ENCODE measurements at regions of chr3 and their contacts with region 1.

Region 1: DNA sequence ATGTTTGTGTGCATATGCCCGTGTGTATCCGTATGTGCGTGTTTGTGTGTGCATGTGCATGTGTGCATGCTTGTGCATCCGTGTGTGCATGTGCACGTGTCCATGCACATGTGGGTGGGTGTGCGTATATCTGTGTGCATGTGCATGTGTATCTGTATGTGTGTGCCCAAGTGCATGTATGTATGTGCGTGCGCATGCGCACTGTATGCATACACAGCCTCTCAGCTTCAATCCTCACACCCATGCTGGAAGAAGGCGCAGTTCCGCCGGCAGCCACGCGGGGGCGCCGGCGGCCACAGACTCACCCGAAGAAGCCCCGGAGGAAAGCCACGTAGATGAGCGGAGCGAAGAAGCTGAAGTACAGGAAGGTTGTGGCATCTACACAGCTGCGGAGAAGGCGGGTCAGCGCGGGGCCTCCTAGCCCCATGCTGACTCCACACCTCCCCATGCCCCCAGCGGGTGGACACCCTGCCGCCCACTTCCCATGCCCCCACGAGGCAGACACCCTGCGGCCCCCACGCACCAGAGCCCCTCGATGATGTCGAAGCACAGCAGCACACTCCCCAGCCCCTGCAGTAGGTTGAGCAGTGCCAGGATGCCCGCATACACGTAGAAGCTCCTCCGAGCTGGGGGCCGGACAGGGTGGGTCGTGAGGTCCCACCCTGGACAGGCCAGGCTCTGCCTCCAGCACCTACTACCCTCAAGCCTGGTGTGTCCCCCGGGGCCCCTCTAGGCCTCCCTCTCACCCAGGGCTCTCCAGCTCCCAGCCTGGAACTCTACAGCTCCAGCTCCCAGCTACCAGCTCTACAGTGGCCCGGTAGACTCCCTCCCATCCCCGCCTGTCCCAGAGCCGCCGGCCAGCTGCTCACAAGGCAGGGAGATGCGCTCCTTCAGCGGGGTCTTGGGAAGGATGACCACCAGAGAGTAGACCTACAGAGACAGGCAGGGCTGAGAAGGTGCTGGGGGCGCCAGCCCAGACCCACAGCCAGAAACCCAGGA is 15.4 kb downstream of the TPRA1 start:
- DNase-seq: peak; percentile 79 to 81
- ATAC-seq: peak; percentile 72 to 94 (median 86)
- H3K4me3 ChIP-seq: peak overlapping the region in 1 of 10 donors; percentile 22
- H3K27ac ChIP-seq: peak overlapping the region in 1 of 10 donors; percentile 30
- H3K4me1 ChIP-seq: peaks cover 2 to 16% (median 9%) of the 10 kb centered on the region in 9 donors
- H3K27me3 ChIP-seq: no peaks in the 10 kb centered on the region
- CTCF ChIP-seq: peak; percentile 94 to 99 (median 98)

Region 2: GRCh38 chr3:127366383-127366782 is 208.8 kb before region 1 on chr3:
- intact Hi-C with region 1: no loop called
- DNase-seq: no peak
- ATAC-seq: no peak
- H3K4me3 ChIP-seq: no peak overlapping the region
- H3K27ac ChIP-seq: no peak overlapping the region
- H3K4me1 ChIP-seq: no peaks in the 10 kb centered on the region
- H3K27me3 ChIP-seq: peaks cover 0 to 82% (median 50%) of the 10 kb centered on the region in 7 donors
- CTCF ChIP-seq: no peak

Region 3: DNA sequence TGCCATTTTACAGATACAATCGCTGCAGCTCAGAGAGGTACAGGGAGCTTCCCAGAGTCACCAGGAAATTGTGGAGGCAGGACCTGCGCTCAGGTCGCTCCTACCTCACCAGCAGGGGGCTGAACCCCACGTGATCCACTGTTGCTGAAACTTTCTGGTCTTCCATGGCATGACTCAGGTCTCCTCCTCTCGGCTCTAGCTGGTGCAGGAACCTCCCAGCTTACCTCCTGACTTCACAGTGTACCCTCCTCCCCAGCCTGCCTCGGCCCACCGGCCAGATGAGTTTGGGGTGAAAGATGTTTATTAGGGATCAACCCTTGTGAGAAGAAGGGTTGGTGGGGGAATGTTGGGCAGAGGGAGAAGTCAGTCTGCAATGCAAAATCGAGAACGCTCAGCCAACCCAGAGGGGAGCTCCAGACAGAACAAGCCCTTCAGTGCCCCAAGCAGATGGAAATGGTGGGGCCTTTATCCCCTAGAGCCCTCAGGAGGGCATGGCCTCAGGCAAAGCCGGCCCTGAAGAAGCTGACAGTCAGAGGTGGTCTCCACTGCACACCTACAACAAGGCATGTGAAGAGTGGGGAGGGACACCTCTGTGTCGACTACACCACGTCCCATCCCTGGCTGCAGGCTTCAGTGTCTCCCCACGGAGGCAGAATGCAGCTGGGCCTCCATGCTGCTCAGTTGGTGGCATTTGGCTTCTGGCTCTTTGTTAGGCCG is 168.7 kb before region 1 on chr3:
- intact Hi-C with region 1: no loop called
- DNase-seq: peak in 1 of 2 donors; percentile 2
- ATAC-seq: no peak
- H3K4me3 ChIP-seq: no peak overlapping the region
- H3K27ac ChIP-seq: no peak overlapping the region
- H3K4me1 ChIP-seq: no peaks in the 10 kb centered on the region
- H3K27me3 ChIP-seq: peaks cover 0 to 58% (median 22%) of the 10 kb centered on the region in 7 donors
- CTCF ChIP-seq: no peak

Region 4: GRCh38 chr3:127667119-127667681 is 92.0 kb after region 1 on chr3:
- intact Hi-C with region 1: no loop called
- DNase-seq: no peak
- ATAC-seq: no peak
- H3K4me3 ChIP-seq: no peak overlapping the region
- H3K27ac ChIP-seq: no peak overlapping the region
- H3K4me1 ChIP-seq: peaks cover 0 to 10% (median 7%) of the 10 kb centered on the region in 9 donors
- H3K27me3 ChIP-seq: no peaks in the 10 kb centered on the region
- CTCF ChIP-seq: no peak

Region 5: GRCh38 chr3:127690823-127691452 is 115.8 kb after region 1 on chr3:
- intact Hi-C with region 1: loop called in 1 of 10 experiments (anchors 5 kb)
- DNase-seq: peak in 1 of 2 donors; percentile 38
- ATAC-seq: peak; percentile 40 to 72 (median 66)
- H3K4me3 ChIP-seq: no peak overlapping the region
- H3K27ac ChIP-seq: peak overlapping the region in 9 of 10 donors; percentile 28 to 70 (median 53)
- H3K4me1 ChIP-seq: peaks cover 5 to 52% (median 20%) of the 10 kb centered on the region in 9 donors
- H3K27me3 ChIP-seq: no peaks in the 10 kb centered on the region
- CTCF ChIP-seq: peak; percentile 14 to 66 (median 54)

Region 6: DNA sequence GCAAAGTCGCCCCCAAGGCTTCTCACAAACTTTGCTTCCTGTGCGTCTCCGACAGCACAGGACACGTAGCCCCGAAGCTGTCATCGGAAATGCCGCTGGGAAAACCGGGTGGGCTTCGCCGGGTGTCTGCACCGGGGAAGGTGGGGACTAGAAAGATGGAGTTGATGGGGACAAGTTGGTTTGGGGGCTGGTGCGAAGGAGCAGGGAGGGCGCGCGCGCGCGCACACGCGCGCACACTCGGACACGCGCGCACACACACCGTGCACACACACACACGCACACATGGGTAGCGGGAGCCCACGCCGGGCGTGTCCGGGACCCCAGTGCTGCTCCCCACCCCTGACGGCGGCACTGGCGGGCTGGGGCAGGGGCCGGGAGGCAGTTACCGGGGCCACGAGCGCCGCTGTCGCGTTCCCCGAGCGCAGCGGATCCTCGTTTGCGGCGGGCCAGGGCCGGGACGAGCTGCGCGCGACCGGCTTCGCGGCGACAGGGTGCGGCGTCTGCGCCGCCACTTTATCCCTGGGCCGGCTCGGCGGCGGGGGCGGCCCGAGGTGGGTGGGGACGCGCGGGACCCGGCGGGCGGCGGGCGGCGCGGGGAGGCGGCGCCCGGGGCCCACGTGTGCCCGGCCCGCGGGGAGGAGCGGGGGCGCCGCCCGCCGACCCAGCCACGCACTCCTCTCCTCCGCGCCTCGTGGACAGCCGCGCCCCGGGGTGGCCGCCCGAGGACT is 247.7 kb after region 1 on chr3:
- intact Hi-C with region 1: no loop called
- DNase-seq: peak; percentile 39 to 77
- ATAC-seq: peak; percentile 73 to 87 (median 83)
- H3K4me3 ChIP-seq: peak overlapping the region; percentile 32 to 92 (median 84)
- H3K27ac ChIP-seq: peak overlapping the region; percentile 74 to 98 (median 95)
- H3K4me1 ChIP-seq: peaks cover 5 to 48% (median 32%) of the 10 kb centered on the region in 9 donors
- H3K27me3 ChIP-seq: no peaks in the 10 kb centered on the region
- CTCF ChIP-seq: peak in 6 of 9 donors; percentile 12 to 57 (median 38)

Region 7: DNA sequence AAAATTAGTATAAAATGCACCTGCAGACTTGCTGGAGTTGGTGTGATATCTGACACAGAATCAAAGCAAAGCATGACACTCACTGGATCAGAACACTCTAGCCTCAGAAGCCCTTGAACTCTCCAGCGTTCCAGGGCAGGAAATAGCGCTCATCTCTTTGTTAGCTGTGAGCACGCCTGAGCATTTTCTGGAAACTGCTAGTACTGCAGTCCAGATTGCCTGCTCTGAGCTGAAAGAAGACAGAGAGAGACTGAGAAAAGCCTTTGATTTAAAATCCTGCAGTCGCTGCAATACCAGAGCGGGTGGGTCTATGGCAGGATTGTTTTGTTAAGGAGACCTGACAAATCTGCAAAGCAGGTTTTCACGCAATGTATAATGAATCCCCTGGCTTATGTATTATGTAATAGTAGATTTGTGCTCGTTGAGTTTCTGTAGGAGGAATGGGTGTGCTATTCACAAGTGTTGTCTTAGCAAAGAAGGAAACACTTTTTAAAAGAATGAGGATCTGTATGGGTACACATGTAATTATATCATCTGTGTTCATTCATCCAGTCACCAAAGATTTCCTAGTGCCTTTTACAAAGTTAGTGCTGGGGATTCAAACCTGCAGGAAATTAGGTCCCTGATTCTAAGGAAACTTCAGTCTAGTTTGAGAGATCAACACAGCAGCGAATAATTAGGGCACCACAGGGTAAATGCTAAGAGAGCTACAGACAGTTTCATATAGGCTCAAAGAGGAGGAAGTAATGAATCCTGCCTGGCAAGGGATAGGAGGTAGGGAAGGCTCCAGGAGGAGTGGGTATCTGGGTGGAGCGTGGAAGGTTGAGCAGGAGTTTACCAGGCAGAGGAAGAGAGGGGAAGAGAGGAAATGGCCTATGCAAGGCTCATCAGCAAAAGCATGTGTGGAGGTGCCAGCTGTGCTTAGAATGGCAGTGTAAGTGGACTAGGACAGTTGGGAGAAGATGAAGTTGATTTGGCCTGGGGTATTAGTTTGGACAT is 273.3 kb after region 1 on chr3:
- intact Hi-C with region 1: loop called in 1 of 10 experiments (anchors 10 kb)
- DNase-seq: no peak
- ATAC-seq: peak in 6 of 8 donors; percentile 58 to 75 (median 66)
- H3K4me3 ChIP-seq: no peak overlapping the region
- H3K27ac ChIP-seq: no peak overlapping the region
- H3K4me1 ChIP-seq: peaks cover 0 to 13% (median 0%) of the 10 kb centered on the region in 9 donors
- H3K27me3 ChIP-seq: no peaks in the 10 kb centered on the region
- CTCF ChIP-seq: peak in 2 of 9 donors; percentile 7

Region 8: DNA sequence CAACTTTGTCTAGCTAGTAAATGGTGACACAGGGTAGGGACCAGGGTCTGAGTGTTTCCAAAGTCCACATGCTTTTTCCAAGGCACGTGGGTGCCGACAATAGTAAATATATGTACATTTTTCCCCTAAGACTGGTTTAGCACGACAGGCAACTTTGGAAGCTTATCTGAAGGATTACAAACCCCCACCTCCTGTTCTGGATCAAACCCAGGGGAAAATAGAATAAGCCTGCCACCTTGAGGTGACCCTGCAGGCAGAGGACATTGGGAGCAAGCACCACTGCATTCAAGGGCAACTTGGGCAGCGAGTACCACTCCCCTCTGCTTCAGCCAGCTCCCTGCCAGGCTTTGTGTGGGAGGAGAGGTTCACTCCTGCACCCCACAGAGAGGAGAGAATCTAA is 384.7 kb after region 1 on chr3:
- intact Hi-C with region 1: loop called in 1 of 10 experiments (anchors 10 kb)
- DNase-seq: peak in 1 of 2 donors; percentile 52
- ATAC-seq: peak; percentile 54 to 74 (median 62)
- H3K4me3 ChIP-seq: no peak overlapping the region
- H3K27ac ChIP-seq: peak overlapping the region in 9 of 10 donors; percentile 23 to 94 (median 69)
- H3K4me1 ChIP-seq: peaks cover 0 to 63% (median 10%) of the 10 kb centered on the region in 9 donors
- H3K27me3 ChIP-seq: no peaks in the 10 kb centered on the region
- CTCF ChIP-seq: peak in 7 of 9 donors; percentile 30 to 66 (median 53)

Region 9: GRCh38 chr3:127970966-127971592 is 395.9 kb after region 1 on chr3:
- intact Hi-C with region 1: loop called in 6 of 10 experiments (anchors 2 to 10 kb)
- DNase-seq: peak in 1 of 2 donors; percentile 28
- ATAC-seq: peak; percentile 69 to 87 (median 79)
- H3K4me3 ChIP-seq: no peak overlapping the region
- H3K27ac ChIP-seq: no peak overlapping the region
- H3K4me1 ChIP-seq: peaks cover 0 to 9% (median 0%) of the 10 kb centered on the region in 9 donors
- H3K27me3 ChIP-seq: no peaks in the 10 kb centered on the region
- CTCF ChIP-seq: peak; percentile 59 to 82 (median 70)